Astrocyte of the cerebellum (primary cell): ENCODE measurements at regions of chr4 and their contacts with region 1.

Region 1: GRCh38 chr4:186719925-186720694 is 3.5 kb downstream of the FAT1 start:
- DNase-seq: peak; percentile 15
- H3K4me3 ChIP-seq: no peak overlapping the region
- CTCF ChIP-seq: peak; percentile 32

Region 2: GRCh38 chr4:186669735-186670134 is 50.4 kb before region 1 on chr4:
- in situ Hi-C with region 1: loop called (anchors 5 kb)
- DNase-seq: no peak
- H3K4me3 ChIP-seq: no peak overlapping the region
- CTCF ChIP-seq: no peak

Region 3: DNA sequence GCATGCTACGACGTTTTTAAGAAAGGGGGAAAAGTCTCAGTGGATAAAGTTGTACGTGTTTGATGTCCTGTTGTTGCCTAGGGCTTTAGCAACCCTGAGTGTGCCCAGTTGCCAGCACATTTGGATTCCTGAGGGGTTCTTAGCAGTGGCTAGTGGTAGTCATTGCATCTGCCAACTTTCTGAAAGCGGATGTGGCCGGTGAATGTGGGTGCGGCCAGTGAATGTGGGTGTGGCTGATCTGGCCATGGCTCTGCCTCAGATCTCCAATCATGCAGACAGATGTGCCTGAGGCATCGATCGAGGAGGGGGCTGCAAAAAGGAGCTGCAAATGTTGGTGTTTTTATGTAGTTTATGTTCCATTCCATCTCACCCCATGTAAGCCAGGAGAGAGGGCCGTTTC is 45.0 kb after region 1 on chr4:
- in situ Hi-C with region 1: no loop called
- DNase-seq: no peak
- H3K4me3 ChIP-seq: no peak overlapping the region
- CTCF ChIP-seq: no peak

Region 4: GRCh38 chr4:186775902-186776301 is 55.8 kb after region 1 on chr4:
- in situ Hi-C with region 1: no loop called
- DNase-seq: no peak
- H3K4me3 ChIP-seq: no peak overlapping the region
- CTCF ChIP-seq: no peak